A549 (cell line): ENCODE measurements at regions of chr17 and their contacts with region 1.

Region 1: DNA sequence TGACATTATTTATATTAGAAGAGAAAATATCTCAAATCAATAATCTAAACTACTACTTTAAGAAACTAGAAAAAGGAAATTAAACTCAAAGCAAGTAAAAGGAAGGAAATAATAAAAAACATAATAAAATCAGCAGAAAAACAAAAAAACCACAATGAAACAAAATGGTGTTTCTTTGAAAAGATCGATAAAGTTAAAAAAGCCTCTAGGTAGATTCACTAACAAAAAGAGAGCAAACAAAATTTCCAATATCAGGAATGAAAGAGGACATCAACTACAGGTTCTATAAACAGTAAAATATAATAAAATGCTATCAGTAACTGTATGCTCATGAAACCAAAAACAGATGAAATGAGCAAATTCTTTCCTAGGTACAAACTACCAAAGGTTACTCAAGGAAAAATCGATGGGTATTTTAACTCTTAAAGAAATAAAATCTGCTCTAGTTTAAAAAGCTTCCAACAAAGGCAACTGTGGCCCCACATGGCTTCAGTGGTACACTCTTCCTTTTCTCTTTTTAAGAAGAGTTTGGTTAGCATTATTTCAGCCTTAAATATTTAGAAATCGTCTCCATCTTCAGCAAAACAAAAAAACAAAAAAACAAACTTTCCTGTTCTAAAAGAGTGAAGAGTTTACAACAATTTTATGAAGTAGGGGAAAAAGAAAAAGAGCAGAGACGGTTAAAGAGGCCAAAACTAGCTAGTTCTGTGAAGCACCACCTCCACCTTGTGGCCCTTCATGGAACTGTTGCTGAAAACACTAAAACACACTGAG is 102.2 kb downstream of the TRIM37 start:
- DNase-seq: peak; percentile 49 to 70
- ATAC-seq: peak; percentile 74 to 90; a peak in 4 of 6 replicates
- H3K4me3 ChIP-seq: no peak overlapping the region
- H3K27ac ChIP-seq: no peak overlapping the region
- H3K4me1 ChIP-seq: 0 out of 3 replicates have a peak, but pooled peaks cover 4% of the 10 kb centered on the region
- CTCF ChIP-seq: peak; percentile 99
- EP300 ChIP-seq: no peak
- POLR2A ChIP-seq: no peak
- RAD21 ChIP-seq: peak; percentile 95 to 98

Region 2: DNA sequence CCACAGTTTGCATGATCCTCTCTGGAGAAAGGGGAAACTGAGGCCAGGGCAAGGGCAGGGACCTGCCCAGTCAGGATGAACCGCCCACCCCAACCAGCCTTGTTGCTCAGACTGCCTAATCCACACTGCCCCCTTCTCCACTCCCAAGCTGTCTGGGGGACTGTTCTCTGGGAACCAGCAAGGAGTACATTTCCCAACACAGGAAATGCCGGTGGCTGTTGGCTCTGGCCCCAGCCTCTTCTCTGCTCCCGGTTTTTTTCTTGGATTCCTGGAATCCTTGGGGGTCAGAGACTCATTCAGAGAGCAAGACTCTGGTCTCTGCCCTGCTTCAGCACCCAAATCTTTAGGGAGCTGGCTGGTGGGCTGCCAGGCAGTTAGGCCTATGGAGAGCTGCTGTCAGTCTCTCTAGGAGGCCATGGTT is 479.3 kb before region 1 on chr17:
- CTCF ChIA-PET with region 1: interaction called, 42 read pairs
- POLR2A ChIA-PET with region 1: no interaction called
- DNase-seq: no peak
- ATAC-seq: no peak
- H3K4me3 ChIP-seq: no peak overlapping the region
- H3K27ac ChIP-seq: peak overlapping the region; percentile 19 to 26; a peak in 3 of 6 replicates
- H3K4me1 ChIP-seq: peaks cover 5% of the 10 kb centered on the region; the same call in 1 of the 3 replicates
- CTCF ChIP-seq: no peak
- EP300 ChIP-seq: no peak
- POLR2A ChIP-seq: no peak
- RAD21 ChIP-seq: no peak

Region 3: GRCh38 chr17:58643140-58643539 is 361.4 kb before region 1 on chr17:
- CTCF ChIA-PET with region 1: interaction called, 12 read pairs
- POLR2A ChIA-PET with region 1: no interaction called
- DNase-seq: peak; percentile 56 to 57
- ATAC-seq: peak; percentile 87 to 90
- H3K4me3 ChIP-seq: no peak overlapping the region
- H3K27ac ChIP-seq: peak overlapping the region; percentile 18 to 72; a peak in 3 of 6 replicates
- H3K4me1 ChIP-seq: peaks cover 20% of the 10 kb centered on the region
- CTCF ChIP-seq: no peak
- EP300 ChIP-seq: no peak
- POLR2A ChIP-seq: no peak
- RAD21 ChIP-seq: no peak

Region 4: DNA sequence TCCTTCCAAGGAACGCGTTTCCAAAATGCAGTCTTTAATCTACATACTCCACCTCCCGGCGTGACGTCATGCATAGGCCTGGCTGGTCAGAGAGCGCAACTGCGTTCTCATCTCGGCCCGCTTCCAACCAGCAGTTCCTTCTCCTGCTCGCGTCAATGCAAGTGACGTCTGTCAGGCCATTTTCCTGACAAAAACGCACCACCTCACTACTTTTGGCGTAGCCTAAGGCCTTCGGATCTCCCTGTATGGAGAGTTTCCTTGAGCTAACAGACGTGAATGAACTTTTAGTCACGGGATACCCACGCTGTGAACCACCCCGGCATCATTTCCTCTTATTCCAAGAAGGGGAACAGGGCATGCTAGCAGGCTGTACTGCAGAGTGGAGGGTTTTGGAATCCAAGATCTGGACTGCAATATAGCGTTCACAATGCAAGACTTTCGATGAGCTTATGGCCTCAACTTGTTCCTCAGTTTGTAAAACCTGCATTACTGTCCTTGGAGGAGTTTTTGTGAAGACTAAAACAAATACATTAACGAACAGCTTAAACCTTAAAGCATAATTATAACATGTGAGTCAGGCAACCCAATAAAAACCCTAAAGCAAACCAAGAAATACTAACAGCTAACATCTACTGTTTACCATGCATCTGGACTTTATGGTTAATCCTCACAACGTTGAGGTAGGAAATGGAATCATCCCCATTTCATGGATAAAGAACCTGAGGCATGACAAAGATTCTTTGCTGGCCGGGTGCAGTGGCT is 337.5 kb before region 1 on chr17:
- CTCF ChIA-PET with region 1: interaction called, 17 read pairs
- POLR2A ChIA-PET with region 1: no interaction called
- DNase-seq: peak; percentile 72 to 94
- ATAC-seq: peak; percentile 91 to 93
- H3K4me3 ChIP-seq: peak overlapping the region; percentile 46
- H3K27ac ChIP-seq: peak overlapping the region; percentile 40 to 72
- H3K4me1 ChIP-seq: peaks cover 10% of the 10 kb centered on the region; the same call in 1 of the 3 replicates
- CTCF ChIP-seq: no peak
- EP300 ChIP-seq: no peak
- POLR2A ChIP-seq: no peak
- RAD21 ChIP-seq: no peak

Region 5: DNA sequence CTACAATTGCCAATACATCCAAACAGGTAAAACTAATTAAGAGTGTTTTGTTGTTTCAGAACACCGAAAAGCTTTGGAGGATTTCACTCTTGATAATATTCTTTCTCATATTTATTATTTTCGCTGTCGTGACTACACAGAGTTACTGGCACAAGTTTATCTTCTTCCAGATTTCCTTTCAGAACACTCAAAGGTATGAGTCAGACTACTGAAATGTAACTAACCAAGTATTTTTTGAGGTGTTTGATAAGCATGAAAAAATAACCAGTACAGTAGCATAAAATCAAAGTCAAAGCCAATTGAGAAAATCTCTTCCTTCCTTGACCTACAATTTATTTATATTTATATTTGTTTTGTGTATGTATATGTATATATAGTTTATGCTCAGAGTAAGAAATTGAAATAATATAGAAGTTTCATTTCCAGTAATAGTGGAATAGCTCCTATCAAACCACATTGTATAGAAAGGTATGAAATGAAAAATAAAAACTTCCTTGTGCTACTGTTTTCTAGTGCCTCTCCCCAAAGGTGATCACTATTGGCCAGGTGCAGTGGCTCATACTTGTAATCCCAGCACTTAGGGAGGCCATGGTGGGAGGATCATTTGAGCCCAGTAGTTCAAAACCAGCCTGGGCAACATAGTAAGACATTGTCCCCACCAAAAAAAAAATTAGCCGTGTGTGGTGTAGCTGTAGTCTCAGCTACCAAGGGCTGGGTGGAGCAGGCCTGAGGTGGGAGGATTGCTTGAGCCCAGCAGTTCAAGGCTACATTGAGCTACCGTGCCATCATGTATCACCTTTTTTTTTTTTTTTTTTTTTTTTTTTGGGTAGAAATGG is 301.2 kb before region 1 on chr17:
- CTCF ChIA-PET with region 1: interaction called, 24 read pairs
- POLR2A ChIA-PET with region 1: no interaction called
- DNase-seq: no peak
- ATAC-seq: no peak
- H3K4me3 ChIP-seq: no peak overlapping the region
- H3K27ac ChIP-seq: no peak overlapping the region
- H3K4me1 ChIP-seq: no peaks in the 10 kb centered on the region
- CTCF ChIP-seq: no peak
- EP300 ChIP-seq: no peak
- POLR2A ChIP-seq: no peak
- RAD21 ChIP-seq: no peak

Region 6: DNA sequence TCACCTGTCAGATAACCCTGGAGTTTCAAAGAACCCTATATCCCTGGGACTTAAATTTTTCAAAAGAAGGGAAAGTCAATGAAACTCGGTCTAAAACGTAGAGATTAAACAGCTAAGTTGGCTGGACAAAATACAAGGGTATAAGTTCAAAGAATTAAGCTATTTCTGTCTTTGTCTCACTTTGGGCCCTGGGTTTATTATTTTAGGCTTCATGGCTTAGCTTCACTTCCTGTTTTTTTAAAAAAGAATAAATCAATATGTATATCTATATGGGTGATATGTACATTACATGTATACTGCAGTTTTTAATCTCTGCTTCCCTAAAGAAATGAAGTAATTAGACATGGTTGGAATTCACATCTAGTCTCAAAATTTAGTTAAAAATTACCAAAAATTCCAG is 30.2 kb before region 1 on chr17:
- CTCF ChIA-PET with region 1: interaction called, 15 read pairs
- POLR2A ChIA-PET with region 1: no interaction called
- DNase-seq: no peak
- ATAC-seq: no peak
- H3K4me3 ChIP-seq: no peak overlapping the region
- H3K27ac ChIP-seq: no peak overlapping the region
- H3K4me1 ChIP-seq: no peaks in the 10 kb centered on the region
- CTCF ChIP-seq: no peak
- EP300 ChIP-seq: no peak
- POLR2A ChIP-seq: no peak
- RAD21 ChIP-seq: no peak

Region 7: DNA sequence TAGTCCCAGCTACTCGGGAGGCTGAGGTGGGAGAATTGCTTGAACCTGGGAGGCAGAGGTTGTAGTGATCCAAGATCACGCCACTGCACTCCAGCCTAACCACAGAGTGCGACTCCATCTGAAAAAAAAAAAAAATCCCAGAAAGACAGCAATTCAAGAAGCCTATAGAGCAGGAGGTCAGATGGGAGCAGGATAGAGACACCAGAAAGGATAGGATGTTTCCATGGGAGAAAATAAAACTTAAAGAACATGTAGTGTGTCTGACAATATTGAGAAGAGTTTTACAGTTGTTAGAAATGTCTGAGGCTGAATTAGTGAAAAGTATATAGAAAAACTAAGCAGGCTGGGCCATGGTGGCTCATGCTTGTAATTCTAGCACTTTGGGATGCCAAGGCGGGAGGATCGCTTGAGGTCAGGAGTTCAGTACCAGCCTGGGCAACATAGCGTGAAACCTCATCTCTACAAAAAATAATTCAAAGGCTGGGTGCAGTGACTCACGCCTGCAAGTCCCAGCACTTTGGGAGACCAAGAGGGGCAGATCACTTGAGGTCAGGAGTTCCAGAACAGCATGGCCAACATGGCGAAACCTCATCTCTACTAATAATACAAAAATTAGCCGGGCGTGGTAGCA is 117.4 kb after region 1 on chr17:
- CTCF ChIA-PET with region 1: no interaction called
- POLR2A ChIA-PET with region 1: no interaction called
- DNase-seq: no peak
- ATAC-seq: no peak
- H3K4me3 ChIP-seq: no peak overlapping the region
- H3K27ac ChIP-seq: no peak overlapping the region
- H3K4me1 ChIP-seq: no peaks in the 10 kb centered on the region
- CTCF ChIP-seq: no peak
- EP300 ChIP-seq: no peak
- POLR2A ChIP-seq: no peak
- RAD21 ChIP-seq: no peak

Region 8: DNA sequence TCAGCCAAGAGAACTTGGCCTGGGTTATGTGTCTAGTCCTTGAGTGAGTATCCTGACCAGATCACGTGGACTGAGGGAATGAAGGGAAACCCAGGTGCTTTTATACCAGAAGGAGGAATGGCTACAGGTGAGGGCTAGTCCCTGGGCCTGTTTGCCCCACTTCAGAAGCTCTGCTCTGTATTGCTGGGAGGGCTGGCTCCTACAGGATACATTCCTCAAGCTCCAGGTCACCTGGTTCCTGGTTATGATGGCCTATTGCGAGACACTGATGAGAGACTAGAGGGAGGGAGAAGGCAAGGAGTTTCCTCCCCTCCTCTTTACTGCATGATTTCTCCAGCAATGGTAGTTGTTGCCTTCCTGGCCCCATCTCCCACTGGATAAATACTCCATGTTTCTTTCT is 186.3 kb after region 1 on chr17:
- CTCF ChIA-PET with region 1: no interaction called
- POLR2A ChIA-PET with region 1: no interaction called
- DNase-seq: no peak
- ATAC-seq: no peak; a peak in 1 of 6 replicates
- H3K4me3 ChIP-seq: no peak overlapping the region
- H3K27ac ChIP-seq: no peak overlapping the region
- H3K4me1 ChIP-seq: 0 out of 3 replicates have a peak, but pooled peaks cover 4% of the 10 kb centered on the region
- CTCF ChIP-seq: no peak
- EP300 ChIP-seq: no peak
- POLR2A ChIP-seq: no peak
- RAD21 ChIP-seq: no peak